ENCODE measurements at regions of chr11 and their contacts with region 1.

Region 1: GRCh38 chr11:123580557-123581275 is 73.7 kb downstream of the SCN3B start:
- DNase-seq: peak; percentile 75
- H3K27ac ChIP-seq: no peak overlapping the region
- CTCF ChIP-seq: peak; percentile 94

Region 2: DNA sequence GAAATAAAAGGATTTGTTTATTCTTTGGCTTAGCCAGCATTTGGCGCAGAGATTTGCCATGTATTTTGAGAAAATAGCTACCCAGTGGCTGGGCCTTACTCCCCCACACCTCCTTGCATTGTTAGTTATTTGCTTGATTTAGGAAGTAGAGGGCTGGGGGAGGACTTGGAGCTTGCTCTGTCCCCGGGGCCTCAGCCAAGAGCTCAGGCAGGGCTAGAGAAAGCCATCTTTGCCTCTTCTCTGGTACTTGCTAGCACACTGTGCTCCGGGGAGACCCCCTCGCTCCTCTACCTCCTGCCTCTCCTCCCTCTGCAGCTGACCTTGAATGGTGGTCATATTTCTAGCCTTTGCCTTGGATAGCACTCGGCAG is 19.3 kb before region 1 on chr11:
- CTCF ChIA-PET with region 1: interaction called, 10 read pairs
- POLR2A ChIA-PET with region 1: no interaction called
- DNase-seq: no peak
- H3K27ac ChIP-seq: no peak overlapping the region
- CTCF ChIP-seq: no peak

Region 3: GRCh38 chr11:123616505-123617198 is 35.9 kb after region 1 on chr11:
- CTCF ChIA-PET with region 1: interaction called, 12 read pairs
- POLR2A ChIA-PET with region 1: no interaction called
- DNase-seq: peak; percentile 89
- H3K27ac ChIP-seq: peak overlapping the region; percentile 67
- CTCF ChIP-seq: no peak

Region 4: DNA sequence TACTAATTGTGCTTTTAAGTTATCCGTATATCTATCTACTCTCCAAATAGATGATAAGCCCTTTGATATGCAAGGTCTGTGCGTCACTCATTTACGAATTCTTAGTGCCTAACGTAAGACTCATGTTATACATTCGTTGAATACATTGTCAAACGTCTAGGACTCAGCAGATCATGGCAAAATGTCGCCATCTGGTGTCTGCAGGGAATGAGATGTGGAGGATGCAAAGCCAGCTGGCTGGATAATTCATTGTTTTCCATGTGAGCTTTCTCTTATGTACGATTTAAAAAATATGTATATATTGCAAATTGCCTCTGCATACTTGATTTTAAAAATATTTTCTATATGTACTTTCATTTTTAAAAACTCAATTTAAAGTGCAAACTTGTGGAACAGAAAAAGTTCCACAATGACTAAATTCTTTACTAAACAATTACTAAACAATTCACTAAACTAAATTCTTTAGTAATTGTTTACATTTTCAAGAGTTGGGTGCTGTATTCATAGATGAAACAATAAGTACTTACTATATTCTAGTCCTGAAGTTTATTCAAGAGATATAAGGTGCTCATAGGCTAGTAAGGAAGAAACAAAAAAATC is 127.0 kb after region 1 on chr11:
- CTCF ChIA-PET with region 1: interaction called, 45 read pairs
- POLR2A ChIA-PET with region 1: no interaction called
- DNase-seq: peak; percentile 72
- H3K27ac ChIP-seq: no peak overlapping the region
- CTCF ChIP-seq: peak; percentile 73